ENCODE measurements at regions of chr7 and their contacts with region 1.

Region 1: GRCh38 chr7:27095897-27096767 is at the start of gene HOXA1:
- DNase-seq: peak; percentile 85
- ATAC-seq: peak; percentile 91
- H3K4me3 Mint-ChIP-seq: peak within 1 kb of the TSS; percentile 70
- H3K27ac Mint-ChIP-seq: peak within 1 kb of the TSS; percentile 5
- H3K4me1 Mint-ChIP-seq: peaks cover 23% of the 10 kb centered on the region
- H3K27me3 Mint-ChIP-seq: peaks cover 84% of the 10 kb centered on the region
- total RNA-seq, gene HOXA1: 0.12 to 0.14 TPM

Region 2: GRCh38 chr7:25862260-25863037 is 1233.7 kb before region 1 on chr7:
- CTCF ChIA-PET with region 1: no interaction called
- POLR2A ChIA-PET with region 1: no interaction called
- intact Hi-C with region 1: loop called (anchors 5 kb)
- DNase-seq: peak; percentile 99
- ATAC-seq: peak; percentile 94
- H3K4me3 Mint-ChIP-seq: peak overlapping the region; percentile 68
- H3K27ac Mint-ChIP-seq: peak overlapping the region; percentile 69
- H3K4me1 Mint-ChIP-seq: peaks cover 26% of the 10 kb centered on the region
- H3K27me3 Mint-ChIP-seq: peaks cover 46% of the 10 kb centered on the region

Region 3: DNA sequence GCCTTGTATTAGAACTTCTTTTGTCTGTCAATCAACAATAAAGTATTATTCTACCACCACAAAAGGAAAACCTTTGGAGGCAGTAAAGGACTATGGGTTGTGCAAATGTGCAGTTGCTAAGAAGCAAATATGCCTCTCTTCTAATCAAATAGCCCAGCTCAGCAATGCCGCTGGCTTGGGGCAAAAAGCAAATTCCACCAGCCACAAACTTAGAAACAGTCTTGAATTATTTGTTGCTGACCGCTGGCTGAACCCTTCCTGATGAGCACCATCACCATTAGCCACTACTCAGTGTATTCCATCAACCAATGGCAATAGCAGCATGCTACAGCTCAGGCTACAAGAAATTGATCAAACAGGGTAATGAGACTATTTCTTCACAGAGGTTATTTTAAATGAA is 282.7 kb before region 1 on chr7:
- CTCF ChIA-PET with region 1: no interaction called
- POLR2A ChIA-PET with region 1: no interaction called
- intact Hi-C with region 1: no loop called
- DNase-seq: no peak
- ATAC-seq: no peak
- H3K4me3 Mint-ChIP-seq: no peak overlapping the region
- H3K27ac Mint-ChIP-seq: no peak overlapping the region
- H3K4me1 Mint-ChIP-seq: no peaks in the 10 kb centered on the region
- H3K27me3 Mint-ChIP-seq: peaks cover 5% of the 10 kb centered on the region

Region 4: DNA sequence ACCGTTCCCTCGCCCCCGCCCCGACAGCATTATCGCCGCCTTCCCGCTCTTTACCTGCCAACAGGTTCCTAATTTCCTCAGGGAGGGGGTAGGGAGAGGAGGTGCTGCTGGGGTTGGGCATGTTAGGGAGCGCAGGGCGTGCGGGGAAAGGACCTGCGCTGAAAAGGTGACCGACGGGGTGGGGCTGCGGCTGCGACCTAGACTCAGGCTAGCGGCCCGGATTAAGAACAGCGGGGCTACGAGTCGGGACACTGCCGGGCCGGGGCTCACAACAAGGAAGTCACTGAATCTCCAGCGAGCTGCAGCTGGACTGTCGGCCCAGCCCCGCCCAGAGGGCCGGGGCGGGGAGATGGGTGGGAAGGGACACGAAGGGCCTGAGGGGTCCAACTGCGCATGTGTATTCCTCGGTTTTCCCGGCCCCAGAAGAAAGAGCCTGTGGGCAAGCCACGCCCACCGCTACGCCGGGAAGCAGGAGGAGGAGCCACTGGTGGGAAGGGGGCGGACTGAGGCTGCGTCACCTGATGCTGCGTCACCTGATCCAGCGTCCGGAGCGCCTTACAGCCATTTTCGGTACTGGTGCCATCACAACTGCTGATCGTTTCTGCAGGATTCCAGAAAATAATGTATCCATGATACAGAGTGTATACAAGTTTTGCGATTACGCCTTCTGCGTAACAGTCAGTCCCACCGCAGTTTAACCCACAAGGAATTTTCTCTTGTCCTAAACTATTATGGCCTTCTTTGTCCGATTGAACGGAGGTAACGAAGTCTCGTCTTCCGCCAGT is 231.6 kb before region 1 on chr7 and contains the start of gene SKAP2:
- CTCF ChIA-PET with region 1: no interaction called
- POLR2A ChIA-PET with region 1: no interaction called
- intact Hi-C with region 1: loop called (anchors 1 to 5 kb)
- DNase-seq: peak; percentile 94
- ATAC-seq: peak; percentile 95
- H3K4me3 Mint-ChIP-seq: peak within 1 kb of the TSS; percentile 86
- H3K27ac Mint-ChIP-seq: peak within 1 kb of the TSS; percentile 83
- H3K4me1 Mint-ChIP-seq: peaks cover 17% of the 10 kb centered on the region
- H3K27me3 Mint-ChIP-seq: peaks cover 34% of the 10 kb centered on the region
- total RNA-seq, gene SKAP2: 7.8 to 10.4 TPM

Region 5: DNA sequence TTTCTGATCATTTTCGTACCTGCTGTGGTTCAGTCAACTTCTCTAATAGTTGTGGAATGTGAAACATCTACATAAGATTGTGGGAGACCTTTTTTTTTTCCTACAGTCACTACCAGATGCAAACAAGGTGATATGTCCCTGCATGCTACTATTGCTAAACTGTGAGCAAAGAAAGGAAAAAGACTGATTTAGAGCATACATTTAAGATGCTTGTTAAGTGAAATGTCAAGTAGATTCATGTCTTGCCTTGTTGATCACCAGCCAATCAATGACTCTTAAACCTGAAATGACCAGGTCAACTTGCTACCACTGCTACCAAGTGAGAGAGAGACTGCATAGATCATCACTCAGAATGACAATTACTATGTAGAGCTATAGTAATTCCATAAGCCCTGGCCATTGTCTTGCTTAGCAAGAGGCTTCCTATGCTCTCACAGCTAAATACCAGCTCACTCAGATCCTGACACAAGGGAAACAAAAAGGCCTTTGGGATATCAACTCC is 147.5 kb before region 1 on chr7:
- CTCF ChIA-PET with region 1: no interaction called
- POLR2A ChIA-PET with region 1: no interaction called
- intact Hi-C with region 1: no loop called
- DNase-seq: no peak
- ATAC-seq: no peak
- H3K4me3 Mint-ChIP-seq: no peak overlapping the region
- H3K27ac Mint-ChIP-seq: no peak overlapping the region
- H3K4me1 Mint-ChIP-seq: no peaks in the 10 kb centered on the region
- H3K27me3 Mint-ChIP-seq: peaks cover 15% of the 10 kb centered on the region

Region 6: GRCh38 chr7:27130540-27131389 is 34.6 kb after region 1 on chr7 and contains the start of gene HOXA4:
- CTCF ChIA-PET with region 1: interaction called, 3 read pairs
- POLR2A ChIA-PET with region 1: no interaction called
- intact Hi-C with region 1: loop called (anchors 1 to 5 kb)
- DNase-seq: peak; percentile 83
- ATAC-seq: peak; percentile 87
- H3K4me3 Mint-ChIP-seq: peak within 1 kb of the TSS; percentile 56
- H3K27ac Mint-ChIP-seq: peak within 1 kb of the TSS; percentile 42
- H3K4me1 Mint-ChIP-seq: peaks cover 17% of the 10 kb centered on the region
- H3K27me3 Mint-ChIP-seq: peaks cover 38% of the 10 kb centered on the region
- total RNA-seq, gene HOXA4: 0.25 TPM in 1 of 2 experiments, not detected in the other

Region 7: DNA sequence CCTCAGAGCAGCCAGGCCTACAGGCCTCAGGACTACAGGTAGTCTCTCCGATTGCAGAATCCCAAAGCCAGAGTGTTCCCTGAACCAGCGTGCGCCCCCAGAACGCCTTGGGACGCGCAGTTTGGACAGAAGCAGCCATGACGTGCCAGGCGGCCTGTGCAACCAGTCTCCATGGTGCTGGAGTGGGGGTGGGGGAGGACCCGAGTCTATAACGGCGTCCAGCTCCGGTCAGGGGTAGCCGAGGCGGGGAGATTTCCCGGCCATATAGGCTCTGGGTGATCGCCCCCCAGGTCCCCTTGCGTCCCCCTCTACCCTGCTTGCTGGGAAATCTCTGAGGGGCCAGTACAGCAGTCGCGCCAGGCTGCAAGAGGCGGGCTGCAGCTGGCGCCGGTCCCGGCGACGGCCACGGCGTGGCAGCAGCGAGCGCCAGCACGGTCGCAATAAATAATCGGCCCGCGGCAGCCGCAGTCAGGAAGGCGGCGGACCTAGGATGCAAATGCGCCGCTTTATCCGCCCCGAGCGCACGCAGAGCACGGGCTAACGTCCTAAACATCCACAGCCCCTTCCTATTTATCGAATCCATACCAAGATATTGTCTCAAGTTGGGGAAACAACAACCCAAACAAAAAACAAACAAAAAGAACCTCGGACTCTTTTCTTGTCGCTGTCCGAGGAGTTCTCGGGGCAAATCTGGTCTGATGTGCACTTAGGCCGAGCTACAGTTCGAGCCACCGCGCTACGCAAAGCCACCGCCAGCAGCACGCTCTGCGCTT is 54.6 kb after region 1 on chr7:
- CTCF ChIA-PET with region 1: interaction called, 5 read pairs
- POLR2A ChIA-PET with region 1: no interaction called
- intact Hi-C with region 1: loop called (anchors 2 to 5 kb)
- DNase-seq: peak; percentile 82
- ATAC-seq: peak; percentile 83
- H3K4me3 Mint-ChIP-seq: peak overlapping the region; percentile 35
- H3K27ac Mint-ChIP-seq: no peak overlapping the region
- H3K4me1 Mint-ChIP-seq: peaks cover 36% of the 10 kb centered on the region
- H3K27me3 Mint-ChIP-seq: peaks cover 83% of the 10 kb centered on the region

Region 8: DNA sequence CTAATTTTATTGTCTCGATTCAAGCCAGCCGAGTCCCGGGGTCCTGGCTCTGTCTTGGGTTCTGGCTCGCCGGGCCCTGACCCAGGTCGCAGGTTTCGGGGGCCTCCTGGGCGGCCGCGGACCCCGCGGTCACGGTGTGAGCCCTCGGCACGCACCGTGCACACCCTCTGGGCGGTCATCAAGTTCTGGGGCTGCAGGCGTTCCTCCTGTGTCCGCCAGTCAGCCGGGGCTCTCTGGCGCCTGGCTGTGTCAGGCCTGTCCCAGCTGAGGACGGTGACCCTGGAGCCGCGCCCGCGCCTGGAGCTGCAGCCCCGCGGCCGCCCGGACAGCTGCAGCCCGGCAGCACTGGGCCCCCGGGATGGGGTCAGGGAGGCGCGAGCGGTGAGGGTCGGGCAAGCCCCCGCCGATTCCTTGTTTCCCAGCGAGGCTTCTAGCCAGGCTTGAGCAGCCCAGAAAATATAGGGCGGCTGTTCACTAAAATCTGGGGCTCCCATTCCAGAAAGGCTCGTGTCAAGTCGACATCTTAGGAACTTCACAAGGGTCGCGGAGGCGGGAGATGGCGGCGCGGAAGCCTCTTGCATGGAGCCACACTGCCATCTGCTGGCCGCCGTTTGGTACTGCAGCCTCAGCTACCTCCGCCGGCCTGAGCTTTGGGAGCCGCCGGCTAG is 64.5 kb after region 1 on chr7:
- CTCF ChIA-PET with region 1: interaction called, 5 read pairs
- POLR2A ChIA-PET with region 1: no interaction called
- intact Hi-C with region 1: loop called in 1 of 2 experiments (anchors 5 kb)
- DNase-seq: peak; percentile 91
- ATAC-seq: peak; percentile 50
- H3K4me3 Mint-ChIP-seq: peak overlapping the region; percentile 62
- H3K27ac Mint-ChIP-seq: no peak overlapping the region
- H3K4me1 Mint-ChIP-seq: peaks cover 24% of the 10 kb centered on the region
- H3K27me3 Mint-ChIP-seq: peaks cover 74% of the 10 kb centered on the region

Region 9: GRCh38 chr7:27242555-27243339 is 146.6 kb after region 1 on chr7 and contains the start of gene EVX1:
- CTCF ChIA-PET with region 1: interaction called, 3 read pairs
- POLR2A ChIA-PET with region 1: no interaction called
- intact Hi-C with region 1: loop called (anchors 5 kb)
- DNase-seq: peak; percentile 77
- ATAC-seq: peak; percentile 56
- H3K4me3 Mint-ChIP-seq: peak within 1 kb of the TSS; percentile 33
- H3K27ac Mint-ChIP-seq: no peak within 1 kb of the TSS
- H3K4me1 Mint-ChIP-seq: peaks cover 18% of the 10 kb centered on the region
- H3K27me3 Mint-ChIP-seq: peaks cover 74% of the 10 kb centered on the region
- total RNA-seq, gene EVX1: not detected

Measured in activated CD4-positive, alpha-beta T cell treated with anti-CD3 and anti-CD28 coated beads for 36 hours (primary cell).